Right cardiac atrium (tissue), 5 donors: ENCODE measurements at regions of chr17 and their contacts with region 1.

Region 1: GRCh38 chr17:36629252-36629847 is 28.0 kb downstream of the MRM1 start:
- DNase-seq: peak; percentile 74 to 88 (median 88)
- ATAC-seq: peak; percentile 86 to 89
- H3K4me3 ChIP-seq: no peak overlapping the region
- H3K27ac ChIP-seq: no peak overlapping the region
- H3K4me1 ChIP-seq: no peaks in the 10 kb centered on the region
- H3K27me3 ChIP-seq: no peaks in the 10 kb centered on the region

Region 2: DNA sequence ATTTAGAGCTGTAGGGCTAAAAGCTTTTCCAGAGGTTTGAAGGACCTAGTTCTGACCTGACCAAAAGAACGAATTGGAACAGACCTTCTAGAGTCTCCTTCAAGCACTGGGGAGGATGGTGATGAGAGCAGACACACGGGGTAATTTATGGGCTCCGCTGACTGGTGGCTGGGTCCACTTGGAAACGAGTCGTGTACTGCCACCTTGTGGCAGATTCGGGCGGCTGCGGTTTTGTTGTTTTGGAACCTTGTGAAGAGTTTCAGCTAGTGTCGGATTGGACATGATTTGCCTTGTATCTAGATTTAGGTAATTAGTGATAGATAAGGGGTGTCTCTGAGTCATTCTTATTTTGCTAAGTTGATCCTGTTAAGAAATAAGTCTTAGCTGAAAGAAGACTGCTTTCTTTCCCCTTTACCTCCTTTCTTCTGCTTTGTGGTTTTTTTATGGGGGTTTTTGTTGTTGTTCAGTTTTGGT is 418.3 kb after region 1 on chr17:
- intact Hi-C with region 1: loop called (anchors 5 kb)
- DNase-seq: peak; percentile 72 to 90 (median 88)
- ATAC-seq: peak; percentile 69 to 76
- H3K4me3 ChIP-seq: no peak overlapping the region
- H3K27ac ChIP-seq: no peak overlapping the region
- H3K4me1 ChIP-seq: no peaks in the 10 kb centered on the region
- H3K27me3 ChIP-seq: no peaks in the 10 kb centered on the region

Region 3: DNA sequence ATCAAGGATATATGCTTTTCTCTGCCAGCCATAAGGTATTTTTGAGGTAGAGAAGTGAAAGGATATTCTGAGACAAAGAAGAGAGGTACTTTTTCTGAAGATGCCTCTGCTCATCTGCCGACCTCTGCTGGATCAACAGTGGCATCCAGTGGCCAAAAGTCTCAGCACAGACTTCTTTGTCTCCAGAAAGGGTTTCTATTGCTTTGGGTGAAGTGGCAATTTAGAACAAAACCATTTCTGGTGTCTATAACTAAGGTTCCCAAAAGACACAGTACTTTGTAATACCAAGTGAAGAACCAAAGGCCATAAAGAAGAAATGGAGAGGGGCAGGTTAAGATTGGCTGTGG is 591.2 kb after region 1 on chr17:
- intact Hi-C with region 1: loop called in 1 of 4 experiments (anchors 10 kb)
- DNase-seq: no peak
- ATAC-seq: no peak
- H3K4me3 ChIP-seq: no peak overlapping the region
- H3K27ac ChIP-seq: no peak overlapping the region
- H3K4me1 ChIP-seq: no peaks in the 10 kb centered on the region
- H3K27me3 ChIP-seq: no peaks in the 10 kb centered on the region

Region 4: GRCh38 chr17:37239690-37240334 is 610.5 kb after region 1 on chr17:
- intact Hi-C with region 1: loop called in 2 of 4 experiments (anchors 10 kb)
- DNase-seq: no peak
- ATAC-seq: peak; percentile 64 to 70
- H3K4me3 ChIP-seq: no peak overlapping the region
- H3K27ac ChIP-seq: no peak overlapping the region
- H3K4me1 ChIP-seq: no peaks in the 10 kb centered on the region
- H3K27me3 ChIP-seq: no peaks in the 10 kb centered on the region